WTC11 (cell line): ENCODE measurements at regions of chr3 and their contacts with region 1.

Region 1: DNA sequence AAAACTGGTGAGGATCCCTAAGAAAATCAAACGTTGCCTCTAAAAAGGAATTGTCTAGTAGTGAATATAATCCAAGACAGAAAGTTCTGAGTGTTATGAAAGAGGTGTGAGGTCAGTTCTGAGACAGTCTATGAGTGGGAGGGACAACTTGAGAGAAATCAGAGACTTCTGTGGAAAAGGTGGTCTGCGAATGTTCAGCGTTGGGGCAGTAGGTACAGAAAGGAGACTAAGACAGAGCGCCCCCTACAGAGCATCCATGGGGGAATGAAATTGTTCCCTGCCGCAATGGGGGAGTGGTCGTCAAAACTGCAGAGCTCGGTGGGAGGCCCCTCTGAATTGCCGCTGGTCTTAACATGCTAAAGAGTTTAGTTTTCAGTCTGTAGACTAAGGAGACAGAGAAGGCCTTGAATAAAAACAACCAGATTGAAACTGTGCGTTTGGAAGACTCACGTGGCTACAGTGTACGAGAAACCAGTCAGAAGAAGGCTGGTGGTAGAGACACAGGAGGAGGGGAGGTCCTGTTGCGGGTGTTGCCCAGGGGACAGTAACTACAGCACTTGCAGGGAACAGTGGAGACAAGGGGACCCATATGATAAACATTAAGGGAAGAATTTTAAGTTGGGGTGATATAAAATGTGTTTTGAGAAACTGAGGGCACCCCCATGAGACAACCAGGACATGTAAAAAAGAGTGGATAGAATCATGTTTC is 6.9 kb downstream of the TNIK start:
- DNase-seq: peak; percentile 78
- ATAC-seq: peak; percentile 76
- H3K4me3 Mint-ChIP-seq: no peak overlapping the region
- H3K27ac Mint-ChIP-seq: no peak overlapping the region
- H3K4me1 Mint-ChIP-seq: peaks cover 11% of the 10 kb centered on the region
- H3K27me3 Mint-ChIP-seq: no peaks in the 10 kb centered on the region
- CTCF ChIP-seq: peak; percentile 76

Region 2: DNA sequence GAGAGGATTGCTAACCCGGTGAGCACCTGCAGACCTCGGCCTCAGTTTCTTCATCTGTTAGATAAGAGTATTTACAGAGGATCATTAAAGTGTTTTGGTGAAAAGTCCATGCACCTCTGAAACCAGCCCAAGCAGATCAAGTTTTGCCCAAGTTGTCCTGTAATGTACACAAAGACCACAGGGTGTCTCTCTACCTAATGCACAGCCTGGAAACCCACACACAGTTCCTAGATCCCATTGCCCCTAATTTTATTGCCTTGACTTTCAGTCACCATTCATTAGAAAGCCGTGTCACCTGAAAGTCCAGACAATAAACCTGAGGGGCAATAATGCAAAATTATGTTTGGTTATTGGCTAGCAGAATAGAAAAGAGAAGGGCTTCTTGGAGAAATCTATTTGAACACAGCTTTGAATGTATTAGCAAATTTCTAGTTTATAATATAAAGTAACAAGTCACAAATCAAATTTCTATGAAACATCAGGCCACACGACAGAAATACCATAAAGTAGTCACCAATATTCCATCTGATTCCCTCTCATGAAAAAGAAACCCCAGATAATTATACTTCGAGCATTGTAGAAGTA is 265.5 kb before region 1 on chr3:
- CTCF ChIA-PET with region 1: interaction called, 10 read pairs
- POLR2A ChIA-PET with region 1: no interaction called
- DNase-seq: no peak
- ATAC-seq: peak; percentile 85
- H3K4me3 Mint-ChIP-seq: no peak overlapping the region
- H3K27ac Mint-ChIP-seq: no peak overlapping the region
- H3K4me1 Mint-ChIP-seq: peaks cover 32% of the 10 kb centered on the region
- H3K27me3 Mint-ChIP-seq: no peaks in the 10 kb centered on the region
- CTCF ChIP-seq: 0 out of 2 replicates have a peak, but pooled peaks have one; percentile 22

Region 3: DNA sequence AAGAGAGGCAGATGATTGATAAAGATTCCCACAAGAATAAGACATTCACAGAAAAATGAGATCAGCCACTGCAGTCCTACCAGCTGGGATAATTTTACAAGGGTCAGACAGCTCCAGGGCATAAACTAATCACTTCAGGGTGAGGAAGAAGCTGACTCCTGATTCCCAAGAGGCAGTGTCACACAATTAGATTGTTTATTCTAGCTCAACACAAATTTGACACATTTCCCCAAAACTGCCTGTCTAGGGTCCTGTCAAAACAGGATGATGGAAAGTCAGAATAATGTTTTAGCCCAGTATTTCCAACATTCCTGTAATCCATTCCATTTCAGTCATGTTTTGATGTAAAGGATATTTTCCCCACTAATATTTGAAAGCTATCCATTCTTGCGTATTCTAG is 103.9 kb before region 1 on chr3:
- CTCF ChIA-PET with region 1: interaction called, 10 read pairs
- POLR2A ChIA-PET with region 1: no interaction called
- DNase-seq: no peak
- ATAC-seq: no peak
- H3K4me3 Mint-ChIP-seq: no peak overlapping the region
- H3K27ac Mint-ChIP-seq: no peak overlapping the region
- H3K4me1 Mint-ChIP-seq: peaks cover 70% of the 10 kb centered on the region
- H3K27me3 Mint-ChIP-seq: no peaks in the 10 kb centered on the region
- CTCF ChIP-seq: no peak

Region 4: DNA sequence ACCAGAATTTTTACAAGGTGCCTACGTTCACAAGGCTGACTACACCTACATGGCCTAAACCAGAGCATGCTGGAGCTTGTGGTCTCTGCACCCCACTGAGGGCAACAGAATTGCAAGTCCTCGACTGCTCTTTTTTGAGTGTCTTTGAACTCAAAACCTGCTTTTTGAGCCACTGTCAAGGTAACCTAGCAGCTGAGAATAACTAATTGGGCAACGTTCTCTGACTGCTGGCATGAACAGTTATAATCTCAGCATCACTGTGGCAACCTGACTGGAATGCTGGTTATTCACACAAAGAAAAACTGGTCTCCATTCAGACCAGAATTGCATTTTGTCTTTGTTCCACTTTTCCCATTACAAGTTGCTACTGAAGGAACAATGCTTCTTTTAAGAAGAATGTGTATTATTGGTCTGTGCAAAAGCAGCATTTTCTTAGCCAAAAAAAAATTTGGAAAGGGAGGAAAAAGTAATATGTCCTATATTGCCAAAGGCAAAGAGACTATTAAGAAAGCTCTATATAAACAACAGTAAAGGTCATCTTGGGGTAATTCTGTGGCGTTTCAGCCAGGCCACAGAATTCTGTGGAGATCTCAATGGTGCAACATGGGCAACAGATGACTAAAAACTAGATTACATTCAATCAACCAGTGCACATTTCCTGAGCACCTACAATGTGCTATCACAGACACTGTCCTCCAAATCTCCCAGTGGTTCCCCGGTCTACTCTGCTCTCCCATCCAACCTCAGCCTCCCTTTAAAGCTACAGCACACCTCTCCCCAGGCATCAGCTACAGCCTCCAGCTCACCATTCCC is 69.9 kb before region 1 on chr3:
- CTCF ChIA-PET with region 1: interaction called, 26 read pairs
- POLR2A ChIA-PET with region 1: no interaction called
- DNase-seq: no peak
- ATAC-seq: peak; percentile 17
- H3K4me3 Mint-ChIP-seq: peak overlapping the region; percentile 10
- H3K27ac Mint-ChIP-seq: peak overlapping the region; percentile 6
- H3K4me1 Mint-ChIP-seq: peaks cover 71% of the 10 kb centered on the region
- H3K27me3 Mint-ChIP-seq: no peaks in the 10 kb centered on the region
- CTCF ChIP-seq: no peak

Region 5: GRCh38 chr3:171428321-171428787 is 25.0 kb before region 1 on chr3:
- CTCF ChIA-PET with region 1: interaction called, 13 read pairs
- POLR2A ChIA-PET with region 1: no interaction called
- DNase-seq: peak; percentile 23
- ATAC-seq: peak; percentile 73
- H3K4me3 Mint-ChIP-seq: no peak overlapping the region
- H3K27ac Mint-ChIP-seq: no peak overlapping the region
- H3K4me1 Mint-ChIP-seq: peaks cover 19% of the 10 kb centered on the region
- H3K27me3 Mint-ChIP-seq: no peaks in the 10 kb centered on the region
- CTCF ChIP-seq: no peak

Region 6: GRCh38 chr3:171436380-171436779 is 17.0 kb before region 1 on chr3:
- CTCF ChIA-PET with region 1: interaction called, 23 read pairs
- POLR2A ChIA-PET with region 1: no interaction called
- DNase-seq: no peak
- ATAC-seq: no peak
- H3K4me3 Mint-ChIP-seq: no peak overlapping the region
- H3K27ac Mint-ChIP-seq: peak overlapping the region; percentile 32
- H3K4me1 Mint-ChIP-seq: peaks cover 75% of the 10 kb centered on the region
- H3K27me3 Mint-ChIP-seq: no peaks in the 10 kb centered on the region
- CTCF ChIP-seq: no peak

Region 7: DNA sequence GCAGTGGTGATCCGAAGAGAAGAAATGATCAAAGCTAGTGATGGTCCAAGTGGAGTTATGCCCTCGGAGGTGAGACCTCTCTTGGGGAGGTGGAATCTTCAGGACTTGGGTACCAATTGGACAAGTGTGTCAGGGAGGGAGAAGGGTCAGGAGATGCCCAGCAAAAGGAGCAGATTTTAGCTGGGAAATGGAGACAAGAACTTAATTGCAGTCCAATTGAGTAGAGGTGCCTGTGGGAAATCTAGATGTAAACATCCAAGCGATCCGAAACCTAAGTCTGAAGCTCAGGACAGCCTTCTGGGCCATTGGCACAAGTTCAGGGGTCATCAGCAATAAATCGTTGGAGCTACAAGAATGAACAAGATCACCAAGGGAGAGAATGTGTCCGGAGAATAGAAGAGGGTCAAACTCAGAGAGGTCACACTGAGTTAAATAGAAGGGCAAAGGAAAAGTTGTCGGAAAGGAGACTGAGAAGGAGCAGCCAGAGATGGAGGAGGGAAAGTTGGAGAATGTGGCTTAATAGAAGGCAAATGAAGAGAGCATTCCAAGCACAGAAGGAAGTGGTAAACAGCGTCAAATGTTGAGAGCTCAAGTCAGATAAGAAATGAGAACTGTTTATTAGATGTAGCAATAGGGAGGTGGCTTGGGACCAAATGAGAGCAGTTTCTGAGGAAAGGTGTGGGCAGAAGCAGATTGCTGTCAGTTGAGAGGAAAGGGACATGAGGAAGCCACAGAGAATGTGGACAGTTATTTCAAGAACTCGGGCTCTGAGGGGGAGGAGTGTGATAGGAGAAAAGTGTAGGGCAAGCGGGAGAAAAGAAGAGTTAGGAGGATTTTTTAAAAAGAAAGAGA is 521.9 kb after region 1 on chr3:
- CTCF ChIA-PET with region 1: no interaction called
- POLR2A ChIA-PET with region 1: no interaction called
- DNase-seq: no peak
- ATAC-seq: no peak
- H3K4me3 Mint-ChIP-seq: no peak overlapping the region
- H3K27ac Mint-ChIP-seq: no peak overlapping the region
- H3K4me1 Mint-ChIP-seq: peaks cover 8% of the 10 kb centered on the region
- H3K27me3 Mint-ChIP-seq: no peaks in the 10 kb centered on the region; the same call in 1 of the 2 replicates
- CTCF ChIP-seq: no peak